ENCODE measurements at regions of chr6 and their contacts with region 1.

Region 1: GRCh38 chr6:109095027-109095834 is at the start of gene CEP57L1:
- DNase-seq: peak; percentile 97
- ATAC-seq: peak; percentile 79
- H3K4me3 Mint-ChIP-seq: peak within 1 kb of the TSS; percentile 91
- H3K27ac Mint-ChIP-seq: peak within 1 kb of the TSS; percentile 99
- H3K4me1 Mint-ChIP-seq: peaks cover 46% of the 10 kb centered on the region
- H3K27me3 Mint-ChIP-seq: no peaks in the 10 kb centered on the region
- total RNA-seq, gene CEP57L1: 23.8 to 36.9 TPM

Region 2: DNA sequence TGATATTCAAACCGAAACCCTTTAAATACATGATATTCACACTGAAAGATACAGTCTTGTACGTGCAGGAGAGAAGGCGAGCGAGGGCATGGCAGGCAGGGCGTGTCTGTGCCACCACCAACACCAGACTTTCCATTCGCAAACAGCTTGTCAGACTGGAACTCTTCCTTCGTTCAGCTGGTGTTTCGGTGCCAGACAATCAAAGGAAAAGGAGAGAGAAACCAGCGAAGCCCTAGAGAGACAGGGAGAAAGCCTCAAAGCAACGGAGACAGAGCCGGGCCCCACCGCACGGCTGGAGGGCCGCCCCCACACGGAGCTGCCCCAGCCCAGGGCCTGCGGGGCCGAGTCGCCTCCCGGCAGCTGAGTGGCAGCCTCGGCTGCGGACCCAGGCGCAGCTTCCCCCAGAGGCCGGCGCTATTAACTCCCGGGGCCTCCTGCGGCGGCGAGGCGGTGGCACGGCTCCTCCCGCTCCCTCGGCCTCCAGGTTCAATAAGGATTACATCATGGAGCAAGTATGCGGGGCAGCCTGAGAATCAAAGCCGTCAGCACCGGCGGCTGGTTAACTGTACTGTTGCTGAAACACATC is 961.5 kb before region 1 on chr6:
- CTCF ChIA-PET with region 1: no interaction called
- POLR2A ChIA-PET with region 1: no interaction called
- intact Hi-C with region 1: loop called in 1 of 2 experiments (anchors 5 kb)
- DNase-seq: peak; percentile 73
- ATAC-seq: peak; percentile 90
- H3K4me3 Mint-ChIP-seq: peak overlapping the region; percentile 64
- H3K27ac Mint-ChIP-seq: peak overlapping the region; percentile 88
- H3K4me1 Mint-ChIP-seq: peaks cover 9% of the 10 kb centered on the region
- H3K27me3 Mint-ChIP-seq: peaks cover 63% of the 10 kb centered on the region

Region 3: DNA sequence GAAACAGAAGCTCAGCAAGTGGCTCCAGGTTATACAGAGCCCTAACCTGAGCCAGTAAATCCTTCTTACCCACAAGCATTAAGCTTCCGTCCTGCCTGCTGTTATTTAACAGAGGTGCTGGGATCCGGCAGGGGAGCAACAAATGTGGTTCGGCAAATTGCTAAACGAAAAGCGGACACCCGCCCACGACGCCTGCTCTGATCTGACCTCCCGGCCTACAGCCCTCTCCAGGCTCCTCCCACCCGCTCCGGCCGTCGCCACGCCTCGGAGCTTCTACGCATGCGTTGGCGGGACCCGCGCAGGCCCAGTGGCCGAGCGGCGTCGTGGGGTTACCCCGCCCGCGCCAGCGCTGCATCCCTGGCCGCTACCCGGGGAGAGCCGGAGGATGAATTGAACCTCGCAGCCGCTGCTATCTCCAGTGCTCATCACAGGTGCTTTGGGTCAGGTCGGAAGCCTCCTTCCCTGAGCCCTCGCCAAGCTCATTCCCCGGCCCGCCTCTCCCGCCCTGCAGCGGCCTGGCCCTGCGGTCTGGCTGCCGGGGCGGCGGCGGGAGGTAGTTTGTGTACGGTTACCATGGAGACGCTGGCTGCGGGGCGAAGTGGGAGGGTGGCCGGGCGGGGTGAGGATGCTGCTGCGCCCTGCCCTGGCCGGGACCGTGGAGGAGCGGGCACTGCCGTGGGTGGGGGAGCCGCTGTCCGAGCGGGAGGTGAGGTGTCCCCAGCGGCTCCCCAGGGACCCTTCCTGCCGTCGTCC is 246.9 kb before region 1 on chr6 and contains the start of gene ARMC2:
- CTCF ChIA-PET with region 1: no interaction called
- POLR2A ChIA-PET with region 1: no interaction called
- intact Hi-C with region 1: loop called in 1 of 2 experiments (anchors 1 kb)
- DNase-seq: peak; percentile 91
- ATAC-seq: peak; percentile 93
- H3K4me3 Mint-ChIP-seq: peak within 1 kb of the TSS; percentile 78
- H3K27ac Mint-ChIP-seq: peak within 1 kb of the TSS; percentile 74
- H3K4me1 Mint-ChIP-seq: peaks cover 23% of the 10 kb centered on the region
- H3K27me3 Mint-ChIP-seq: no peaks in the 10 kb centered on the region
- total RNA-seq, gene ARMC2: 3.9 to 5.2 TPM

Region 4: GRCh38 chr6:109373762-109374161 is 278.5 kb after region 1 on chr6:
- CTCF ChIA-PET with region 1: no interaction called
- POLR2A ChIA-PET with region 1: no interaction called
- intact Hi-C with region 1: loop called (anchors 2 kb)
- DNase-seq: peak; percentile 77
- ATAC-seq: peak; percentile 95
- H3K4me3 Mint-ChIP-seq: peak overlapping the region; percentile 68
- H3K27ac Mint-ChIP-seq: peak overlapping the region; percentile 98
- H3K4me1 Mint-ChIP-seq: peaks cover 77% of the 10 kb centered on the region
- H3K27me3 Mint-ChIP-seq: no peaks in the 10 kb centered on the region

Region 5: GRCh38 chr6:109482905-109483735 is 387.9 kb after region 1 on chr6 and contains the start of gene ZBTB24:
- CTCF ChIA-PET with region 1: interaction called, 4 read pairs
- POLR2A ChIA-PET with region 1: interaction called, 6 read pairs
- intact Hi-C with region 1: loop called in 1 of 2 experiments (anchors 1 kb)
- DNase-seq: peak; percentile 94
- ATAC-seq: peak; percentile 84
- H3K4me3 Mint-ChIP-seq: peak within 1 kb of the TSS; percentile 96
- H3K27ac Mint-ChIP-seq: peak within 1 kb of the TSS; percentile 94
- H3K4me1 Mint-ChIP-seq: peaks cover 43% of the 10 kb centered on the region
- H3K27me3 Mint-ChIP-seq: no peaks in the 10 kb centered on the region
- total RNA-seq, gene ZBTB24: 12.0 to 14.7 TPM